Tibial artery (tissue), 4 donors: ENCODE measurements at regions of chr22 and their contacts with region 1.

Region 1: GRCh38 chr22:25172153-25172552 is 27.5 kb upstream of the CRYBB3 start:
- DNase-seq: no peak
- H3K4me3 ChIP-seq: no peak overlapping the region
- H3K27ac ChIP-seq: no peak overlapping the region
- H3K4me1 ChIP-seq: peaks cover 0 to 20% (median 3%) of the 10 kb centered on the region in 4 donors
- H3K27me3 ChIP-seq: no peaks in the 10 kb centered on the region
- CTCF ChIP-seq: peak; percentile 47 to 48

Region 2: DNA sequence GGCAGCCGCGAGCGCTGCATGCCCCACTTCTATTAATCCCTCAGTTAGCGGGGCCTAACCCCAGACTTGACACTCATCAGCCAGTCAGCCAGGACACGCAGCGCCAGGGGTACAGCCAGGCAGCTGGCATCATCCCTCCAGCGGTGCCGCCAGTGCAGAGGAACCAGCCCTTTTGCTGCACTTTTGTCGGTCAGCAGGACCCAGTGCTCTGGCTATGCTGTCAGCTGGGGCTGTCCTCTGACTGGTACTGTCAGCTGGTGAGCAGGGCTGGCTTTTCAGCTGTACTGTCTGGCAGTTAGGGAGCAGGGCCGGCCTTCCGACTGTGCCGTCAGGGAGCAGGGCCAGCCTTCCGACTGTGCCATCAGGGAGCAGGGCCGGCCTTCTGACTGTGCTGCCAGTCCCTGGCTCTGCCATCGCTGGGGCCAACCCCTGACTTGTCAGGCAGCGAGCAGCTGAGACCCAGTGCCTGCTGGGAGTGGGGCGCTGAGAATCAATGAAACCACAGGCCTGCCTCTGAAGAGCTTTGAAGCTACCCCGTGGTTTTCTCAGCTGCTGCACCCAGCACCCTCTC is 104.2 kb before region 1 on chr22:
- intact Hi-C with region 1: loop called (anchors 5 kb)
- DNase-seq: peak; percentile 58 to 93
- H3K4me3 ChIP-seq: peak overlapping the region in 1 of 2 donors; percentile 10
- H3K27ac ChIP-seq: peak overlapping the region; percentile 87 to 93
- H3K4me1 ChIP-seq: peaks cover 7 to 59% (median 31%) of the 10 kb centered on the region in 4 donors
- H3K27me3 ChIP-seq: no peaks in the 10 kb centered on the region
- CTCF ChIP-seq: no peak

Region 3: DNA sequence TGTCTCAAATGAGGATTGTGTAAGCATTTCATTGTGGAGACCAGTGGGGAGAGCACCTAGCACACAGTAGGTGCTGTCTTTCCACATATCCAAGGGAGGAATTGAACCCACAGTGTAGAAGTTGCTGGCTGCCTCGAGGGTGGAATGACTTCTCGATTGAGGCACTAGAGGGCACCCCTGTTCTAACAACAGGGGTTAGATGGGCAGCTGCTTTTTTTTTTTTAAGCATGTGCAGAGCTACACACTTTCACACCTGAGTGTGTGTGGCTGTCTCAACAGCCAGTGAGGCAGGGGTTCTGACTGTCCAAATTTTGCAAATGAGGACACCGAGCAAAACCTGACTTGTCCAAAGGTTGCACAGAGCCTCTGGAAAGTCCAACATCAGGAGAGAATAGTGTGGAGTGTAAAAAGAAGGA is 90.7 kb before region 1 on chr22:
- intact Hi-C with region 1: loop called (anchors 5 kb)
- DNase-seq: peak in 1 of 2 donors; percentile 41
- H3K4me3 ChIP-seq: no peak overlapping the region
- H3K27ac ChIP-seq: peak overlapping the region; percentile 74 to 93
- H3K4me1 ChIP-seq: peaks cover 0 to 98% (median 92%) of the 10 kb centered on the region in 4 donors
- H3K27me3 ChIP-seq: no peaks in the 10 kb centered on the region
- CTCF ChIP-seq: peak; percentile 58 to 67